Gastrocnemius medialis (tissue), 4 donors: ENCODE measurements at regions of chr1 and their contacts with region 1.

Region 1: GRCh38 chr1:8817406-8818324 is at the start of gene RERE:
- DNase-seq: peak; percentile 86 to 95
- ATAC-seq: peak; percentile 91 to 92
- H3K4me3 ChIP-seq: peak within 1 kb of the TSS; percentile 82 to 96 (median 94)
- H3K27ac ChIP-seq: peak within 1 kb of the TSS; percentile 97 to 99 (median 98)
- H3K4me1 ChIP-seq: peaks cover 49 to 59% of the 10 kb centered on the region in 2 donors
- H3K27me3 ChIP-seq: no peaks in the 10 kb centered on the region
- CTCF ChIP-seq: peak in 3 of 5 experiments; percentile 8 to 27 (median 23)
- POLR2A ChIP-seq: peak; percentile 94 to 96
- total RNA-seq, gene RERE: 60.8 to 106 (median 102) TPM

Region 2: DNA sequence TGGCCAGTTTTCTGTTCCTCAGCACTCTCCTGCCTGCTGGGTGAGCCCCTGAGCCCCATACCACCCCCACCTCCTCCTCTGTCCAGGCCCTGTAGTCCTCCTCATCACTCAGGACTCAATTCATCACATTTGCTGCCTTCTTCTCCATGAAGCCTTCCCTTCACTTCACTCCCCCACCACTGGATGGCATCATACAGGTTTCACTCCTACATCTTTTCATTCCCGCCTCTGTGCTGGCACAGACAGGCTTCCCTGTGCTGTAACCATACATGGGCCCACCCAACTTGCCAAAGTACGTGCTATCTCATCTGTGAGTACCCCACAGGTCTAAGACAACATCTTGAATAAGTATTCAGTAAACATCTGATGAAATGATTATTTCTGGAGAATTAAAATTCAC is 442.9 kb before region 1 on chr1:
- in situ Hi-C with region 1: no loop called
- intact Hi-C with region 1: loop called (anchors 10 kb)
- DNase-seq: peak in 1 of 2 donors; percentile 72
- ATAC-seq: no peak
- H3K4me3 ChIP-seq: no peak overlapping the region
- H3K27ac ChIP-seq: peak overlapping the region; percentile 90 to 95 (median 93)
- H3K4me1 ChIP-seq: peaks cover 98 to 99% of the 10 kb centered on the region in 2 donors
- H3K27me3 ChIP-seq: no peaks in the 10 kb centered on the region
- CTCF ChIP-seq: peak; percentile 30 to 58 (median 43)
- POLR2A ChIP-seq: no peak

Region 3: DNA sequence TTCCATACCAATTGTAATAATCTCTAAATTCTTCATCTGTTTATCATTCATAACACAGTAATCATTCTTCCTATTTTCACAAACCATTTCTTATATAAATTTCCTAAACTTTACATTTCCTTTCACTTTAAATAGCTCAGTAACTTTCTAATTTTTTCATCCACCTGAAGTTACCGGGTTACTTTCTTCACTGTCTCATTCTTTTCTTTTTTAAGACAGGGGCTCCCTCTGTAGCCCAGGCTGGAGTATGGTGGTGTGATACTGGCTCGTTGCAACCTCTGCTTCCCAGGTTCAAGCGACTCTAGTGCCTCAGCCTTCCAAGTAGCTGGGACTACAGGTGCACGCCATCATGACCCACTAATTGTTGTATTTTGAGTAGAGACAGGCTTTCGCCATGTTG is 41.6 kb before region 1 on chr1:
- in situ Hi-C with region 1: no loop called
- intact Hi-C with region 1: no loop called
- DNase-seq: no peak
- ATAC-seq: no peak
- H3K4me3 ChIP-seq: no peak overlapping the region
- H3K27ac ChIP-seq: no peak overlapping the region
- H3K4me1 ChIP-seq: peaks cover 5 to 8% of the 10 kb centered on the region in 2 donors
- H3K27me3 ChIP-seq: no peaks in the 10 kb centered on the region
- CTCF ChIP-seq: no peak
- POLR2A ChIP-seq: no peak

Region 4: DNA sequence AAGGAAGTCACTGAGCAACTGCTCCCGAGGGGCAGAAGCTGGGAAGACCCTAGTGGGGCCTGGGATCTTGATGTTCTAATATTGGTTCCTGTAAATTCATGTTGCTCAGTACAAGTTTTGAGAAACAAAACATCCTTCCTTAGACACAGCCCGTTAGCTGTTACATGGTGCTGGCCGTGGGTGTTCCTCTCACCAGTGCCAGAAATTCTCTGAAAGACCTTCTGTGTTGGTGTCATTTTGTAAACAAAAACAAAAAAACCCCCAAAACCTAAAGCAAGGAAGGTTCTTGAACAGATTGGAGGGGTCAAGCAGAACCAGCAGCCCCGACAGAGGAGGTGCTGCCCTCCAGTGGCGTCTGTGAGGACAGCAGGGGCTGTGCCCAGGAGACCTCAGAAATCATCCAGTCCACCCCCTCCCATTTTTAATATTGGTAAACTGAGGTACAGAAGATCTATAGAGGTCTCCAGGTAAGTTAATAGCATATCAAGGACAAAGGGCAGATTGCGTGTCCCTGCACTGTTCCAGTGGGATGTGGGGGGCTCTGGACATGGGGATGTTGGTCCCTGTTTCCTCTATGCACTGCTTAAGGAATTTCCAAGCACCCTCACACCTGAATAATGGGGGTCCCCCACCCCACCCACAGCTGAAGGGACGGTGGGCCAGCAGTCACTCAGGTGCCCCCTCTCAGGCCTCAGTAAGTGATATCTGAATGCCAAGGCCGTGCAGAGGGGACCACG is 170.4 kb after region 1 on chr1:
- in situ Hi-C with region 1: no loop called
- intact Hi-C with region 1: loop called (anchors 5 kb)
- DNase-seq: peak; percentile 10 to 37
- ATAC-seq: peak in 1 of 2 donors; percentile 55
- H3K4me3 ChIP-seq: no peak overlapping the region
- H3K27ac ChIP-seq: no peak overlapping the region
- H3K4me1 ChIP-seq: peaks cover 3 to 5% of the 10 kb centered on the region in 2 donors
- H3K27me3 ChIP-seq: no peaks in the 10 kb centered on the region
- CTCF ChIP-seq: peak; percentile 80 to 92 (median 89)
- POLR2A ChIP-seq: no peak